PC-3 (cell line): ENCODE measurements at regions of chr1 and their contacts with region 1.

Region 1: DNA sequence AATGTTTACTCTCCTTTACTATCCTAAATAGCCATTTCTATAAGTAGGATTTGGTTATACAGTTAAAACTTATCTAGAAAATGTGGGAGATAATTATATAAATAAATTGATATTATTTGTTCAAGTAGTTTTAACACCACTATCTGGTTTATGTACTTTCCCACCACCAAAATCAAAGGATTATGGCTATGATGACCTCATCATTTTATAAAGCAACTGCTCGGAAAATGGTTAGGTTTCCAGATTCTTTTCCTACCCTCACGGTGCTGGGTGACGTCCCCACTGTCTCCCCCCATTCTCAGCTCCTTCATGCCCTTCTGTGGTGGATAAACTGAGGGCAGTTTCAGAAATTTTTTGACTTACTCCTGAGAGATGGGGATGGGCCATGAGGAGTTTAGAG is 1011.8 kb upstream of the ADGRL4 start:
- DNase-seq: no peak
- ATAC-seq: no peak
- H3K4me3 ChIP-seq: no peak overlapping the region
- H3K27ac ChIP-seq: no peak overlapping the region
- H3K4me1 ChIP-seq: no peaks in the 10 kb centered on the region
- H3K27me3 ChIP-seq: no peaks in the 10 kb centered on the region
- CTCF ChIP-seq: no peak

Region 2: DNA sequence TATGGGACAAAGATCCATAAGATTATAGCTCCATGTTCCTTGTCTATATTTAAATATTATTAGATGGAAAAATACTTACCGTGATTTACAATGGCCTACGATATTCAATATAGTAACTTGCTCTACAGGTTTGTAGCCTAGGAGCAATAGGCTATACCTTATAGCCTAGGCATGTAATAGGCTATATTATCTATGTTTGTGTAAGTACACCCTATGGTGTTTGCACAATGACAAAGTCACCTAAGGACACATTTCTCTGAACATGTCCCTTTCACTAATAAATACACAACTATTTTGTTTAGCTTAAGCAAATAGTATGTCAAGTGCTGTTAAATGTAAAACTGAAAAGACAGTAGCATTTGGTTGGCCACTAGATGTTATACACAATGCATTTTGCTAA is 762.9 kb before region 1 on chr1:
- CTCF ChIA-PET with region 1: no interaction called
- POLR2A ChIA-PET with region 1: no interaction called
- intact Hi-C with region 1: no loop called
- DNase-seq: peak; percentile 64
- ATAC-seq: peak; percentile 88
- H3K4me3 ChIP-seq: no peak overlapping the region
- H3K27ac ChIP-seq: peak overlapping the region; percentile 19; the same call in 1 of the 2 replicates
- H3K4me1 ChIP-seq: peaks cover 16% of the 10 kb centered on the region
- H3K27me3 ChIP-seq: no peaks in the 10 kb centered on the region
- CTCF ChIP-seq: no peak

Region 3: DNA sequence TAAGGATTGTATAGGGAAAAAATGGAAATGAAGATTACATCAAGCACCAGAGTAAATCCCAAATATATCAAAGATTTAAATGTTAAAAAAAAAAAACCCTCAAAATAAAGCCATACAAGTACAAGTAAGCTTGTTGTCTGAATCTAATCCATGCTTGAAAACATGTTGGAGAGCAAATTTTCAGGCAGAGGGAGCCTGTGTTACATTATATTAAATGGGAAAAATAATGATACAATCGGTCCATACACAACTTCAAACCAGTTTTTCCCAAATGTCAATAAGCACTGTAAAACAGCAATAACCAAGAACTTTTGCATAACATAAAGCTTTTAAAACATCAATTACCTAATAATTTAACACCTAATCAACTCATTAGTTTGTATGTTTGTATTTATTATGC is 62.4 kb before region 1 on chr1:
- CTCF ChIA-PET with region 1: no interaction called
- POLR2A ChIA-PET with region 1: no interaction called
- intact Hi-C with region 1: loop called (anchors 10 kb)
- DNase-seq: no peak
- ATAC-seq: no peak
- H3K4me3 ChIP-seq: no peak overlapping the region
- H3K27ac ChIP-seq: no peak overlapping the region
- H3K4me1 ChIP-seq: no peaks in the 10 kb centered on the region
- H3K27me3 ChIP-seq: no peaks in the 10 kb centered on the region
- CTCF ChIP-seq: no peak